ENCODE measurements at regions of chr10 and their contacts with region 1.

Region 1: DNA sequence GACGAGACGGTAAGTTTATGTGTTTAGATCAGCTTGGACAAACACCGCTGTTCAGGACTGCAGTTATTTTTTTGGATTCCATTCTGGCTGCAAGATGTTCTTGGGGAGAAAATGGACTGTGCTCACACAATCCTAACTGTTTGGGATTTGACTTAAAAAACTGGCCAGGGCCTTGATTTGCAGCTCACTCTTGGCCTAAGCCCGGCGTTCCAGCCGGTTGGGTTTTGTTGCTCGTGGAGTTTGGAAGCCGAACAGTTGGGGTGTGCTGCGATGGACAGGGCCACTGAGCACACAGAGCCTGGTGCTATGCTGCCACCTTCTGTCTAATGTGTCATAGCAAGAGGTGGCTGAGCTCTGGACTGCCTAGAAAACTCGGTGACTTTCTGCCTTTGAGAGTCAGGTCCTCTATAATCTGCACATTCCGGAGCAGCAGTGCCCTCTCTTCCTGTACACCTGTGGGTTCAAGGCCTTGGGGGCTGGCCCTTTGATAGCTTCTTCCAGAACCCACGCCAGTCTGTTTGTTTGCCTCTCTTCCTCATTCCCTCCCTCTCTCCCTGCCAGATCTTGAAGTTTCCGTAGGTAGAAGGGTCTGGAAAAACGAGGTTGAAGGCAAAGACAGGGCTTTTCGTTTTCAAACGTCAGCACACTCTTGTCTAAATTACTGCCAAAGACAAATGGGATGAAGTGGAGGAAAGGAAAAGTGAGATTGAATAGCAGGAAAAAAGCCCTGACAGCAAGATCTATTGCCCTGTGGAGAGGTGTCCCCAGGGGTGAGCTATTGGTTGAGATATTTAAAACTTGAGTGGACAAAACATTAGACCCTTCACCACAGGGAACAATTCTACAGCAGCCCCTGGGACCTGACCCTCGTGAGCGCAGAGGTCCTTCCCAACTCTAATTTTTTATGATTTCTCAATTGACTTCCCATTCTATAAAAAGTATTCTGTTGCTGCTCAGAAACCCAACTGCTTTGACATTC is 167.5 kb upstream of the HABP2 start:
- DNase-seq: peak; percentile 74
- H3K4me3 ChIP-seq: peak overlapping the region in 1 of 2 experiments; percentile 20; a peak in 1 of 4 replicates
- H3K27ac ChIP-seq: no peak overlapping the region
- H3K4me1 ChIP-seq: peaks cover 0 to 7% of the 10 kb centered on the region in 2 experiments
- H3K27me3 ChIP-seq: no peaks in the 10 kb centered on the region
- CTCF ChIP-seq: peak; percentile 87
- EP300 ChIP-seq: no peak
- RAD21 ChIP-seq: peak; percentile 99

Region 2: GRCh38 chr10:112558476-112559142 is 826.7 kb before region 1 on chr10:
- CTCF ChIA-PET with region 1: interaction called, 14 read pairs
- POLR2A ChIA-PET with region 1: no interaction called
- DNase-seq: no peak
- H3K4me3 ChIP-seq: no peak overlapping the region
- H3K27ac ChIP-seq: no peak overlapping the region
- H3K4me1 ChIP-seq: peaks cover 0 to 7% of the 10 kb centered on the region in 2 experiments; a peak in 2 of 4 replicates
- H3K27me3 ChIP-seq: no peaks in the 10 kb centered on the region
- CTCF ChIP-seq: no peak
- EP300 ChIP-seq: no peak
- RAD21 ChIP-seq: no peak

Region 3: GRCh38 chr10:113131613-113132261 is 253.6 kb before region 1 on chr10:
- CTCF ChIA-PET with region 1: interaction called, 14 read pairs
- POLR2A ChIA-PET with region 1: no interaction called
- DNase-seq: no peak
- H3K4me3 ChIP-seq: no peak overlapping the region
- H3K27ac ChIP-seq: no peak overlapping the region
- H3K4me1 ChIP-seq: peaks cover 2 to 18% of the 10 kb centered on the region in 2 experiments; a peak in 3 of 4 replicates
- H3K27me3 ChIP-seq: no peaks in the 10 kb centered on the region
- CTCF ChIP-seq: no peak
- EP300 ChIP-seq: no peak
- RAD21 ChIP-seq: no peak

Region 4: GRCh38 chr10:113356794-113357680 is 28.3 kb before region 1 on chr10:
- CTCF ChIA-PET with region 1: interaction called, 25 read pairs
- POLR2A ChIA-PET with region 1: no interaction called
- DNase-seq: no peak
- H3K4me3 ChIP-seq: no peak overlapping the region
- H3K27ac ChIP-seq: no peak overlapping the region
- H3K4me1 ChIP-seq: no peaks in the 10 kb centered on the region; a peak in 1 of 4 replicates
- H3K27me3 ChIP-seq: no peaks in the 10 kb centered on the region; the same call in 1 of the 2 replicates
- CTCF ChIP-seq: no peak
- EP300 ChIP-seq: no peak
- RAD21 ChIP-seq: no peak

Region 5: DNA sequence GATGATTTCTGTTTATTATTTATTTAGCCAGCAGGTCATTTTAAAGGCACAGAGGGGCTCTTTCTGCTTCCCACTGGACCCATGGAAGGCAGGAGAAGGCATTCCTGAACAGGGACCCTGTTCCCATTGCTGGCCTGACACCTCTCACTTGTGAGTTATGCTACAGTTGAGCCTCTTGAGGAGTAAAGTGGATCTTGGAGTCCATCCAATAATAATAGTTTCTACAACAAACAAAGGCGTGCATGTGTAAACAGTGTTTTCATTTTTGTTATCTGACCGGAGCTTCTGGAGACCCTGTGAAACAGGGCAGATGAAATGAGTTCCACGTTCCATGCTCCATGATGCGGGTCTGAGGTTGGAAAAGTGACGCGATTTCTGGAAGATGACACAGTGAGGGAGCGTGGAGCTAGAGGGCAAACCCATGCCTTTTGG is 40.2 kb after region 1 on chr10:
- CTCF ChIA-PET with region 1: interaction called, 11 read pairs
- POLR2A ChIA-PET with region 1: no interaction called
- DNase-seq: no peak
- H3K4me3 ChIP-seq: no peak overlapping the region
- H3K27ac ChIP-seq: no peak overlapping the region
- H3K4me1 ChIP-seq: peaks cover 0 to 13% of the 10 kb centered on the region in 2 experiments; a peak in 2 of 4 replicates
- H3K27me3 ChIP-seq: no peaks in the 10 kb centered on the region
- CTCF ChIP-seq: no peak
- EP300 ChIP-seq: no peak
- RAD21 ChIP-seq: no peak

Region 6: DNA sequence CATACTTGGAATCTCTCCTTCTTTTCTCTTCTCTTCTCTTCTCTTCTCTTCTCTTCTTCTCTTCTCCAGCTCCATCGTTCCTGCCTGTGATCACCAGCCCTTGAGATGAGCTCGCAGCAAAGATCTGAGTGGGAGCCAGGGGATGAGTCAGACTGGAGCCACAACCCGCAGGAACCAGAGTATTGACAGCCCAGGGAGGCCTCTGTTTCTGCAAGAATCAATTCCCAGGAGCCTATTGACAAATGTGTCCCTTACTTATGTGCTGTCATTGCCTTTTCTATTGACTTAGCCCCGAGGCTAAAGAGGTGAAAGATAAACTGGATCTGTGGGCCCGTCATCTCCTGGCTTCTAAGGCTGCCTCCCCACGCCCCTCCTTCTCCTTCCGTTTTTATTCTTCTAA is 154.5 kb after region 1 on chr10:
- CTCF ChIA-PET with region 1: no interaction called
- POLR2A ChIA-PET with region 1: no interaction called
- DNase-seq: no peak
- H3K4me3 ChIP-seq: no peak overlapping the region
- H3K27ac ChIP-seq: peak overlapping the region in 1 of 2 experiments; percentile 3; a peak in 1 of 4 replicates
- H3K4me1 ChIP-seq: peaks cover 0 to 14% of the 10 kb centered on the region in 2 experiments; a peak in 2 of 4 replicates
- H3K27me3 ChIP-seq: no peaks in the 10 kb centered on the region
- CTCF ChIP-seq: no peak
- EP300 ChIP-seq: no peak
- RAD21 ChIP-seq: no peak

Region 7: GRCh38 chr10:113563306-113564088 is 178.2 kb after region 1 on chr10:
- CTCF ChIA-PET with region 1: interaction called, 19 read pairs
- POLR2A ChIA-PET with region 1: no interaction called
- DNase-seq: peak; percentile 82
- H3K4me3 ChIP-seq: peak overlapping the region; percentile 42 to 55; a peak in 3 of 4 replicates
- H3K27ac ChIP-seq: no peak overlapping the region
- H3K4me1 ChIP-seq: no peaks in the 10 kb centered on the region; a peak in 1 of 4 replicates
- H3K27me3 ChIP-seq: no peaks in the 10 kb centered on the region; the same call in 1 of the 2 replicates
- CTCF ChIP-seq: peak; percentile 97
- EP300 ChIP-seq: no peak
- RAD21 ChIP-seq: peak; percentile 91

Measured in SK-N-SH (cell line).